PC-9 (cell line): ENCODE measurements at regions of chr2 and their contacts with region 1.

Region 1: GRCh38 chr2:36785179-36785795 is 88.8 kb downstream of the VIT start:
- DNase-seq: peak; percentile 66 to 80
- H3K4me3 ChIP-seq: no peak overlapping the region
- H3K27ac ChIP-seq: no peak overlapping the region
- H3K4me1 ChIP-seq: no peaks in the 10 kb centered on the region
- H3K27me3 ChIP-seq: peaks cover 10% of the 10 kb centered on the region; the same call in 1 of the 2 replicates
- CTCF ChIP-seq: peak; percentile 99

Region 2: GRCh38 chr2:35973132-35973736 is 812.1 kb before region 1 on chr2:
- CTCF ChIA-PET with region 1: no interaction called
- POLR2A ChIA-PET with region 1: no interaction called
- intact Hi-C with region 1: loop called (anchors 5 kb)
- DNase-seq: peak in 1 of 2 experiments; percentile 9
- H3K4me3 ChIP-seq: no peak overlapping the region
- H3K27ac ChIP-seq: no peak overlapping the region
- H3K4me1 ChIP-seq: no peaks in the 10 kb centered on the region
- H3K27me3 ChIP-seq: no peaks in the 10 kb centered on the region
- CTCF ChIP-seq: peak; percentile 68

Region 3: DNA sequence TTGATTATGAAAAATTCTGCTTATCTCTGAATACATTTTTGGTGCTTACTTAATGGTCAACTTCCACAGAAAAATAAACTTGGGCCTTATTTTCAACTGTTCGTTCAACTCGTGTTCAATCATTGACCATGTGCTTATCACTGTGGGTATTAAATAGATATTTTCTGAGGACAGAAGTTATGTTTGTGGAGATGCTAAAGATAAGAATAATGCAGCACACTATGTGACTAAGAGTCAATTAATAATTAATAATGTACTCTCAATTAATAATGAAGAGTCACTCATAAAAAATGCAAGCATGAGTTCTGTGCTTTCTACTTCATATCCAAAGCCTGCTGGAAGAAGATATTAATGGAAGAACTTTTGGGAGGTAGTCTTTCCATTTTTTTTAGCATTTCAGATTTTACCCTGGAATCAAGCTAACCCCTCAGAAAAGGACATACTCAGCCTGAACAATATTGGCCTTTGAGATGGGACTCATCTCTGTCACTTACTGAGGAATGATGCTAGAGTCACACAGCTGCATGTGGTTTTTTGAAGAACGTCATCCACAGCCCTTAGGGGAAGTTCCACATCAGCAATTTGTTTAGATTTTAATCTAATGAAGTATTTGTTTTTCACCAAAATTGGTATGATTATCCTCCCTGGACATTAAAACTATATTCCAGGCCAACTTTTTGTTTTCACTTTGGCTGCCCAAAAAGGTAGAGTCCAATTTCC is 621.6 kb before region 1 on chr2:
- CTCF ChIA-PET with region 1: no interaction called
- POLR2A ChIA-PET with region 1: no interaction called
- intact Hi-C with region 1: no loop called
- DNase-seq: no peak
- H3K4me3 ChIP-seq: no peak overlapping the region
- H3K27ac ChIP-seq: no peak overlapping the region
- H3K4me1 ChIP-seq: no peaks in the 10 kb centered on the region
- H3K27me3 ChIP-seq: no peaks in the 10 kb centered on the region
- CTCF ChIP-seq: no peak

Region 4: DNA sequence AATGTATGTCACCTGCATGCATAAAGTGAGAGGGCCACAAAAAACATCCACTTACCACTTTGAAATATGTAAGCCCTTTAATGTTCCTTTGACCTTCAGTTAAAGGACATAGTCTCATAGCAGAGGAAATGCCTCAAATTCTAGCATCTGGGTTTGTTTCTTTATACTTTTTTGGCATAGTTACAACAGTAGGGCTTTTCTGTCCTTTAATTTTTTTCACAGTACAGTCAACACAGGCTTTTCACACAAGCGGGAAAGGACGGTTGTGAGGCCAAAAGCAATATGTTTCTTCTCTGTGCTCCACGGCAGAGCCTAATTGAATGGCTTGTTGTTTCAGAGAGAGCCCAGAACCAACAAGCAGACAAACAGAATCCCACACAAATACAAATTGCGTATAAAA is 372.1 kb before region 1 on chr2:
- CTCF ChIA-PET with region 1: no interaction called
- POLR2A ChIA-PET with region 1: interaction called, 15 read pairs
- intact Hi-C with region 1: no loop called
- DNase-seq: no peak
- H3K4me3 ChIP-seq: no peak overlapping the region
- H3K27ac ChIP-seq: no peak overlapping the region
- H3K4me1 ChIP-seq: peaks cover 12% of the 10 kb centered on the region; the same call in 1 of the 2 replicates
- H3K27me3 ChIP-seq: no peaks in the 10 kb centered on the region
- CTCF ChIP-seq: no peak

Region 5: DNA sequence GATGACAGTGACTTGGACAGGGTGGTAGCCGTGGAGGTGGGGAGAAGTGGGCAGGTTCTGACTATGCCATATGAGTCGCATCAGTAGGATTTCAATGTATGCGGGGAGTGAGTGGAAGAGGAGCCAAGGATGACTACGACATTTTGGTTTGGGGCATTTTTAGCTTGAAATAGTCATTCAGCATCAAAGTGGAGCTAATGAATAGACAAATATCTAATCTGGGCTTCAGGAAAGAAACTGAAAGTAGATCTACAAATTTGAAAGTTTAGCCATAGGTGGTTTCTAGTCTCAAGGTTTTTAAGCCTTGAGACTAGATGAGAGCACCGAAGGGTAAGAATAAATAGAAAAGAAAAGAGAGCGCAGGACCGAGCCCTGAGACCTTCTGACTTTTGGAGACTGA is 245.7 kb before region 1 on chr2:
- CTCF ChIA-PET with region 1: interaction called, 3 read pairs
- POLR2A ChIA-PET with region 1: no interaction called
- intact Hi-C with region 1: loop called (anchors 10 kb)
- DNase-seq: no peak
- H3K4me3 ChIP-seq: no peak overlapping the region
- H3K27ac ChIP-seq: no peak overlapping the region
- H3K4me1 ChIP-seq: no peaks in the 10 kb centered on the region
- H3K27me3 ChIP-seq: no peaks in the 10 kb centered on the region
- CTCF ChIP-seq: no peak

Region 6: DNA sequence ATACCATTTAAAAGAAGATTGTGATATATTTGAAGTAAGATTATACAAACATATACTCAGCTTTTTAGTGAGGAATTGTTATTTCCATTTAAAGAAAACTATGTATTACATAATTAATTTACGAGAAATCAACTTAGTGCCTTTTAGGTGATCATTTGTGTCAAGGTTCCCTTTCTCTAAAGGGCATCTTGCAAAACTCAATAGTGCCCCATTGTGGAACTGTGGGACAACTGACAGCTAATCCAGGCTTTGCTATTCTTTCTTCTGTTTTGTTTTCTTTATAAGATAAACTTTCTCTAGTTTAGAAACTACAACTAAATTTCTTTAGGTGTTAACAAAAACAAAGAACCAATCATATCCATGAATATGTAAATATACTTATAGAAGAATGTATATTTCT is 113.1 kb before region 1 on chr2:
- CTCF ChIA-PET with region 1: no interaction called
- POLR2A ChIA-PET with region 1: no interaction called
- intact Hi-C with region 1: loop called (anchors 10 kb)
- DNase-seq: peak in 1 of 2 experiments; percentile 53
- H3K4me3 ChIP-seq: no peak overlapping the region
- H3K27ac ChIP-seq: no peak overlapping the region
- H3K4me1 ChIP-seq: no peaks in the 10 kb centered on the region
- H3K27me3 ChIP-seq: no peaks in the 10 kb centered on the region
- CTCF ChIP-seq: peak; percentile 78

Region 7: DNA sequence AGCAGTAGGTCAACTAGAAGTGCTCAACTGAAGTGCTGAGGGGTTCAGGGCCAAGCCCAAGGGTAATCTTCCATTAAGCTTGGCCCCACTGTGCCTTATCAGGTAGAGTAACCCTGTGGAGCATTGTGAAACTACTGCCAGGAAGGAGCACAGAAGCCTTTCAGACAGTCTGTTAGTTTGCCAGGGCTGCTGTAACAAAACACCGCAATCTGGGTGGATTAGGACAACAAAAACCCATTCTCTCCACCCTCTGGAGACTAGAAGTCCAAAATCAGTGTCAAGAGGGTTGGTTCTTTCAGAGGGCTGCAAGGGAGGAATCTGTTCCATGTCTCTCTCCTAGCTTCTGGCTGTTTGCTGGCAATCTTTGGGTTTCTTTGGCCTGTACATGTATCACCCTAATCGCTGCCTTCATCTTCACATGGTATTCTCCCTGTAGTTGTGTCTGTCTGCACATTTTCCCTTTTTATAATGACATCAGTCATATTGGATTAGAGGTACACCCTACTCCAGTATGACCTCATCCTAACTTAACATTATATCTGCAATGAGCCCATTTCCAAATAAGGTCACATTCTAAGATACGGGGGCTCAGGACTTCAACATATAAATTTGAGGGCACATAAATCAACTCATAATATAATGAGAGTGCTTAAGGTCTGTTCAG is 67.6 kb before region 1 on chr2:
- CTCF ChIA-PET with region 1: no interaction called
- POLR2A ChIA-PET with region 1: interaction called, 16 read pairs
- intact Hi-C with region 1: no loop called
- DNase-seq: no peak
- H3K4me3 ChIP-seq: no peak overlapping the region
- H3K27ac ChIP-seq: no peak overlapping the region
- H3K4me1 ChIP-seq: no peaks in the 10 kb centered on the region
- H3K27me3 ChIP-seq: no peaks in the 10 kb centered on the region
- CTCF ChIP-seq: no peak

Region 8: DNA sequence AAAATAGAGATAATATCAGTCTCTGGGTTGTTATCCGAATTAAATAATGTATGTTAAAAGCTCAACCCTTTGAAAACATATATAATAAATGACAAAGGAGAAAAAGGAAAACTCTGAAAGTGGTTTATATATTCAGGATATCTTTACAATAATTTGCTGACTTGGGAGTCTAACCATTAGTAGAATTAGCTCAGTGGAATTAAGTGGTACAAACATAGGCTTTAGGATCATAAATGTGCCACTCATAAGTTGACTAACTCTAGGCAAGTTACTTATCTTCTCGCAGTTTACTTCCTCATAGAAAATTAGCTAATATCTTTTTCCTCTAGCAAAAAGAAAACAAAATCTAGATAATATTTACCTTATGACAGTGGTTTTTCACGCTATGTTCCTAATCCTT is 254.3 kb after region 1 on chr2:
- CTCF ChIA-PET with region 1: no interaction called
- POLR2A ChIA-PET with region 1: no interaction called
- intact Hi-C with region 1: no loop called
- DNase-seq: no peak
- H3K4me3 ChIP-seq: no peak overlapping the region
- H3K27ac ChIP-seq: no peak overlapping the region
- H3K4me1 ChIP-seq: no peaks in the 10 kb centered on the region
- H3K27me3 ChIP-seq: no peaks in the 10 kb centered on the region
- CTCF ChIP-seq: no peak

Region 9: DNA sequence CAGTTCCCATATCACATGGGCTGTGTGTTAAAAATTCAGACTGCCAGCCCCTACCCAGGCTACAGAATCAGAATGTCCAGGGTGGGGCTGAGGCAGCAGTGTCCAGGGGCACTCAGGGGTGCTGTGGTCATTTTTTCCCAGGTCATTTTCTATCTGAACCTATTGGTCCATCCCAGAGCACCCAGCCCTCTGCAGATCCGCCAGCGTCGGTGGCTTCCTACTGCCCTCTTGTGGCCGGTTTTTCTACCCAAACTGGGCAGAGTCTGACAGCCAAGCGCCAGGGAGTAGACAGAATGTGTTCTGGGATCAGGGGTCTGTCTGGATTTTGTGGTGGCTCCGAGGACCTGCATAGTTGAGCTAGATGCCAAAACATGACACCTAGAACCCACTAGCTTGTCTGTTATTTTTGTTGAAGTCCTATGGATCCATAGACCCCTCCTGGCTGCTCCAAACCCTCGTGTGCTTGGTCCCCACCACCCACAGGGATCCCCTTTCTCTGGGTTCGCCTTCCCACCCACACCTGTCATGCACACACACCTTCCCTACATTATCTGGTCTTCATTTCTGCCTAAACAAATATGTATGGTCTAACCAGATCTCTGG is 1105.7 kb after region 1 on chr2:
- CTCF ChIA-PET with region 1: no interaction called
- POLR2A ChIA-PET with region 1: no interaction called
- intact Hi-C with region 1: loop called (anchors 10 kb)
- DNase-seq: peak; percentile 62 to 65
- H3K4me3 ChIP-seq: no peak overlapping the region
- H3K27ac ChIP-seq: no peak overlapping the region
- H3K4me1 ChIP-seq: no peaks in the 10 kb centered on the region
- H3K27me3 ChIP-seq: no peaks in the 10 kb centered on the region
- CTCF ChIP-seq: peak; percentile 90